ENCODE measurements at regions of chr6 and their contacts with region 1.

Region 1: DNA sequence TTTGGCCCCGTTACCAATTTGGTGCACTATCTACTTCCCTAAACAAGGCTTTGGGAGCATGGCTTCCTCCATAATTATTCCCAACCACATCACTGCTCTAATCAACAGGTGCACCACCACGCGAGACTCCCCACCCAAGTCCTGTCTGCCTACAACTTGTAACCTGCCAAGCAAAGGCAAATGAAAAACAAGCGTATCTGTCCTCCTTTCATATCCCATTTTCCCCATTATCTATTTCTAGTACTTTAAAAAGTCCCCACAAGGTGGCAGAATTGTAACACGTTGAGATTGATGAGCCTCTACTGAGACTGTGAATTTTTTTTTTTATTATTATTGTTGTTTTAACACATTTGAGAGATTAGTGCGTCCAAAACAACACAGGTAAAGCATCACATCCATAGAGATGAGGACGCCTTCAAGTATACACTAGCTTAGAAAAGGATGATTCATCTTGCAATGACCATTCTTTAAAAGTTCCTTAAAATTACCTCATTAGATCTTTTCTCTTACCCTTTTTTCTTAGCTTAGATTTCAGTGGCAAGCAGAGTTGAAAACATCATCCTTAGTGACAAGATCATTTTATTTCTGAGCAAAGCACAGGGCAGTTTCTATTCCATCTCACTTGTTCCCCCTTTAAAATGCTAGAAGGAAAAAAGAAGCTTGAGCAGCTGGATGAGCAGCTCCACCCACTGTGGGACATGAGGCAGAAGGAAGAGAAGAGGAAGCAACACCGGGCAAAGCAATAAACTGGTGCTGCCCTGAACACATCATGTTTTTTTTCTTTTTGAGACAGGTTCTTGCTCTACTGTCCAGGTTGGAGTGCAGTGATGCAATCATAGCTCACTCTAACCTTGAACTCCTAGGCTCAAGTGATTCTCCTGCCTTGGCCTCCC is 210.8 kb downstream of the ARHGAP18 start:
- DNase-seq: peak; percentile 67
- ATAC-seq: peak; percentile 28
- H3K4me3 ChIP-seq: peak overlapping the region in 1 of 2 experiments; percentile 19; a peak in 2 of 4 replicates
- H3K27ac ChIP-seq: peak overlapping the region; percentile 97
- H3K4me1 ChIP-seq: peaks cover 67 to 80% of the 10 kb centered on the region in 2 experiments
- H3K27me3 ChIP-seq: no peaks in the 10 kb centered on the region
- CTCF ChIP-seq: peak; percentile 40 to 84 (median 63); a peak in 5 of 6 replicates
- POLR2A ChIP-seq: no peak
- RAD21 ChIP-seq: peak; percentile 92

Region 2: GRCh38 chr6:129195643-129196042 is 303.6 kb before region 1 on chr6:
- CTCF ChIA-PET with region 1: no interaction called
- POLR2A ChIA-PET with region 1: no interaction called
- RAD21 ChIA-PET with region 1: no interaction called
- intact Hi-C with region 1: no loop called
- DNase-seq: no peak
- ATAC-seq: no peak
- H3K4me3 ChIP-seq: no peak overlapping the region
- H3K27ac ChIP-seq: no peak overlapping the region
- H3K4me1 ChIP-seq: peaks cover 6 to 8% of the 10 kb centered on the region in 2 experiments; a peak in 2 of 4 replicates
- H3K27me3 ChIP-seq: no peaks in the 10 kb centered on the region
- CTCF ChIP-seq: 0 out of 6 replicates have a peak, but pooled peaks of 1 of the 3 experiments have one; percentile 10
- POLR2A ChIP-seq: no peak
- RAD21 ChIP-seq: no peak

Region 3: DNA sequence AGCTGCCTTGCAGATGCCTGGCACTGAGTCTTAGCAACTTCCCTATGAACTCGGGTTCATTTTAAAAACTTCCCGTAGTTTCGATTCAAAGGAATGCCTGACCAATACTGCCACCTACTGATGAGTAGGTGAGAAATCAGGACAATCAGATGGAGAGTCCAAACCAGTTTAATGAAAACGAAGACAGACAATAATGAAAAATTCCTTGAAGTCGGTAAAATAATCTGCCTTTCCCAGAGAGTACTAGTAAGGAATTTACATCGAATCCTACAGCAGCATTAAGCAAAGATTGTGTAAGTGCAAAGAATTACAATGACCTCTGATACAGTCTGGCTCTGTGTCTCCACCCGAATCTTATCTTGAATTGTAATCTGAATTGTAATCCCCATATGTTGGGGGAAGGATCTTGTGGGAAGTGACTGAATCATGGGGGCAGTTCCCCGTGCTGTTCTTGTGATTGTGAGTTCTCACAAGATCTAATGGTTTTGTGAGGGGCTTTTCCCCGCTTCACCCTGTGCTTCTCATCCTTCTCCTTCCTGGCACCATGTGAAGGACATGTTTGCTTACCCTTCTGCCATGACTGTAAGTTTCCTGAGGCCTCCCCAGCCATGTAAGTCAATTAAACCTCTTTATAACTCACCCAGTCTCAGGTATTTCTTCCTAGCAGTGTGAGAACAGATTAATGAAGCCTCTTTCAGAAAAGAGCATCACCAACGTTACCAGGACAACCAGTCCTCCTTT is 76.4 kb after region 1 on chr6:
- CTCF ChIA-PET with region 1: interaction called, 5 read pairs
- POLR2A ChIA-PET with region 1: no interaction called
- RAD21 ChIA-PET with region 1: interaction called in 1 of 2 experiments, 5 read pairs
- intact Hi-C with region 1: loop called (anchors 1 kb)
- DNase-seq: peak; percentile 27
- ATAC-seq: peak; percentile 89
- H3K4me3 ChIP-seq: no peak overlapping the region
- H3K27ac ChIP-seq: peak overlapping the region; percentile 40
- H3K4me1 ChIP-seq: peaks cover 12 to 13% of the 10 kb centered on the region in 2 experiments; a peak in 3 of 4 replicates
- H3K27me3 ChIP-seq: no peaks in the 10 kb centered on the region
- CTCF ChIP-seq: peak; percentile 55 to 80 (median 68); a peak in 5 of 6 replicates
- POLR2A ChIP-seq: no peak
- RAD21 ChIP-seq: peak; percentile 85

Region 4: DNA sequence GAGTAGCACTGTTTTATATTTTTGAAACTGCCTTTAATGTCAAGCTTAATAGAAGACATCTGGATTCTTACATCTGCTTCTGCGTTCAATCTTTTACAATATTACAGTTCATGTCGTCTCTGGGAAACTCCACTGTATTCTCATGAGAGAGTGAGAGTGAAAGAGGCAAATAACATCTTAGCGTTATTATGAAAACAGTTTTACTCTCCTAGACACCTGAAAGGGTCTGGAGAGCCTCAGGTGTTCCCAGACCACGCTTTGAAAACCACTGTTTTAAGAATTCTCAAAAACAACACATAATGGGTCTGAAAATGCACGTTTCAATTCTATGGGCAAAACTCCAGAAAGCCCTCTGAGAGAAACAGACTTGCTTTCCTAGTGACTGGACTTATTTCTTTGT is 147.4 kb after region 1 on chr6:
- CTCF ChIA-PET with region 1: no interaction called
- POLR2A ChIA-PET with region 1: no interaction called
- RAD21 ChIA-PET with region 1: no interaction called
- intact Hi-C with region 1: loop called (anchors 5 kb)
- DNase-seq: no peak
- ATAC-seq: no peak
- H3K4me3 ChIP-seq: peak overlapping the region in 1 of 2 experiments; percentile 8; a peak in 1 of 4 replicates
- H3K27ac ChIP-seq: peak overlapping the region; percentile 99
- H3K4me1 ChIP-seq: peaks cover 95 to 98% of the 10 kb centered on the region in 2 experiments
- H3K27me3 ChIP-seq: no peaks in the 10 kb centered on the region
- CTCF ChIP-seq: no peak
- POLR2A ChIP-seq: no peak
- RAD21 ChIP-seq: no peak

Region 5: GRCh38 chr6:129730477-129731165 is 231.4 kb after region 1 on chr6:
- CTCF ChIA-PET with region 1: interaction called, 31 read pairs
- POLR2A ChIA-PET with region 1: interaction called, 3 read pairs
- RAD21 ChIA-PET with region 1: interaction called in 1 of 2 experiments, 3 read pairs
- intact Hi-C with region 1: loop called (anchors 1 kb)
- DNase-seq: no peak
- ATAC-seq: peak; percentile 62
- H3K4me3 ChIP-seq: no peak overlapping the region
- H3K27ac ChIP-seq: peak overlapping the region; percentile 52
- H3K4me1 ChIP-seq: peaks cover 27 to 38% of the 10 kb centered on the region in 2 experiments
- H3K27me3 ChIP-seq: no peaks in the 10 kb centered on the region
- CTCF ChIP-seq: peak; percentile 60 to 85 (median 71)
- POLR2A ChIP-seq: no peak
- RAD21 ChIP-seq: peak; percentile 96

Region 6: DNA sequence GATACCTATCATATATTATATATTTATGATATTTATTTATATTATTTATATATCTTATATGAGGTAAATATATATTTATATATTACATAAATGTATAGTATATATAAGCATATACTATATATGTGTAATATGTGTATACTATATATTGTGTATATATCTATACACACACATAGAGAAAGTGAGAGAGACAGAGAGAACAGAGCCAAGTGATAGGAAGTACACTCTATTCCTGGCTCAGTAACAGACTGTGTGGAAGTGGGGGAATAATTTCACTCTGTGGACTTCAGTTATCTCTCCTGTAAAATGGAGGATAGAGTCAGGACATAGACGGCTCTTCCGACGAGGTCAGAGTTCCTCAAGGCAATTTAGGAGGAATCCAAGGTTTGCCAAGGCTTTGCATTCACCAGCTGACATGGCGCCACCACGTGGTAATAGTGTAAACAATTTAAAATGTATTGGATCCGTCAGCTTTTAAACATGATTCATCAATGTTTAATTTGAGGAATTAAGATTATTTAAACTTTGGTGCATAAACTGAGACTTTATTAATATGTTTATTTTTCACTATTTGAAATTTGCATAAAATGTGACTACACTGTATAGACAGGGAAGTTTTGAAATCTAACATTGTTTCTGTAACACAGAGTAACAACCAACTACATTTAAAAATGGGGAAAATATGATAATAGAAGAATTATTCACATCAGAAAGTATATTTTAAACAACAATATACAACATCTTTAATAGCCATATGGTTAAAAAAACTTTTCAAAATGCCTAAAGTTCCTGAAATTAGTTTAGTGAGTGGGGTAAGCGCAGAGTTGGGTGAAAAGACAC is 437.4 kb after region 1 on chr6:
- CTCF ChIA-PET with region 1: interaction called, 5 read pairs
- POLR2A ChIA-PET with region 1: no interaction called
- RAD21 ChIA-PET with region 1: no interaction called
- intact Hi-C with region 1: loop called (anchors 2 kb)
- DNase-seq: peak; percentile 81
- ATAC-seq: peak; percentile 99
- H3K4me3 ChIP-seq: no peak overlapping the region
- H3K27ac ChIP-seq: no peak overlapping the region
- H3K4me1 ChIP-seq: 0 out of 4 replicates have a peak, but pooled peaks cover 0 to 3% of the 10 kb centered on the region in 2 experiments
- H3K27me3 ChIP-seq: no peaks in the 10 kb centered on the region
- CTCF ChIP-seq: peak; percentile 30 to 75 (median 62); a peak in 4 of 6 replicates
- POLR2A ChIP-seq: no peak
- RAD21 ChIP-seq: peak; percentile 87